HEK293 (cell line): ENCODE measurements at regions of chr18 and their contacts with region 1.

Region 1: GRCh38 chr18:13629841-13630715 is 96.3 kb downstream of the FAM210A start:
- H3K4me3 ChIP-seq: no peak overlapping the region
- H3K27ac ChIP-seq: no peak overlapping the region
- H3K4me1 ChIP-seq: no peaks in the 10 kb centered on the region; the same call in 1 of the 2 replicates
- CTCF ChIP-seq: peak; percentile 84

Region 2: GRCh38 chr18:13558124-13558523 is 72.0 kb before region 1 on chr18:
- CTCF ChIA-PET with region 1: interaction called, 13 read pairs
- POLR2A ChIA-PET with region 1: no interaction called
- H3K4me3 ChIP-seq: no peak overlapping the region
- H3K27ac ChIP-seq: no peak overlapping the region
- H3K4me1 ChIP-seq: no peaks in the 10 kb centered on the region; the same call in 1 of the 2 replicates
- CTCF ChIP-seq: peak; percentile 35

Region 3: GRCh38 chr18:13608810-13609532 is 21.1 kb before region 1 on chr18:
- CTCF ChIA-PET with region 1: no interaction called
- POLR2A ChIA-PET with region 1: no interaction called
- H3K4me3 ChIP-seq: no peak overlapping the region
- H3K27ac ChIP-seq: no peak overlapping the region
- H3K4me1 ChIP-seq: 0 out of 2 replicates have a peak, but pooled peaks cover 3% of the 10 kb centered on the region
- CTCF ChIP-seq: no peak

Region 4: DNA sequence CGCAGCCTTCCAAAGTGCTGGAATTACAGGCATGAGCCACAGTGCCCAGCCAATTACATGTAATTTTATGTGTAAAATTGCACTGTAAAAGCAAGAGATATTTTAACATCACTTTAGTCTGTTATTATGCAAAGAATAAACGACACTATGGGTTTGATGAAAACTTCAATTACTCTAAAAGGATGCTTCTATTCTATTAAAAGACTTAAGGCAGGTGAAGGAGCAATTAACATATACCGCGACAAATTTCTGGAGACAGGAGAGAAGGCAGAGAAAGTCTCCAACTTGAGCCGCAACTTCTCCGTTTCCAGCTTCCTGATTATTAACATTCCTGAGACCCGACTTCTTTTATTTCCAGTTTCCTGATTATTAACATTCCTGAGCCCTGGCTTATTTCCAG is 42.6 kb after region 1 on chr18:
- CTCF ChIA-PET with region 1: no interaction called
- POLR2A ChIA-PET with region 1: no interaction called
- H3K4me3 ChIP-seq: no peak overlapping the region
- H3K27ac ChIP-seq: no peak overlapping the region
- H3K4me1 ChIP-seq: no peaks in the 10 kb centered on the region
- CTCF ChIP-seq: no peak